A673 (cell line): ENCODE measurements at regions of chr2 and their contacts with region 1.

Region 1: GRCh38 chr2:50401772-50402653 is 629.9 kb downstream of the NRXN1 start:
- DNase-seq: peak; percentile 67
- H3K4me3 ChIP-seq: no peak overlapping the region
- H3K27ac ChIP-seq: no peak overlapping the region
- H3K4me1 ChIP-seq: no peaks in the 10 kb centered on the region
- H3K27me3 ChIP-seq: no peaks in the 10 kb centered on the region
- CTCF ChIP-seq: peak; percentile 87

Region 2: DNA sequence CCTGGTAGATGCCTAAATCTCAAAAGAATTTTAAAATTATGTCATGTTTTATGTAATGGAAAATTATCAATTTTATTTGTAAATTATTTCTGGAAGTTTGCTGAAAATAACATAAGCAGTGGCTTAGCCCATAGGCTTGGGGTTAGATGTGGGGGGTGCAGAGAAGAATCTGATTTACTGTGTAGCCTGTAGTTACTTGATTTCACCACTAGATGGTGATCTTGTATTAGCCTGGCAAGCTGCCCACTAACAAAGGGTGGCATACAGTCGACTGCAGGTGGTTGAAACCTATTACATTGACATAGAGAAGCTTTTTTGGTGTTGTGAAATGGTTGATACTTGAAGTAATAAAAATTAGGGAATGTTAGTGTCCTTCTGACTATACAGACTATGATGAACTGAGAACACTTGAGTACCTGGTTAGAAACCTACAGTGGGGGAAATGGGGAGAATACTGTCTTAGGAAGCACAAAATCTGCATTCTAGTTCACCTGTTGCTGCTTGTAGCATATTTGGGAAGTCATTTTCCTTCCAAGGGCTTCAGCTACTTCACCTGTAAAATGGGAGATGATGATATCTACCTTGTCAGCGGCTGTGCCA is 1455.5 kb before region 1 on chr2:
- CTCF ChIA-PET with region 1: interaction called, 3 read pairs
- POLR2A ChIA-PET with region 1: no interaction called
- intact Hi-C with region 1: loop called (anchors 2 kb)
- DNase-seq: peak; percentile 67
- H3K4me3 ChIP-seq: no peak overlapping the region
- H3K27ac ChIP-seq: no peak overlapping the region
- H3K4me1 ChIP-seq: peaks cover 6% of the 10 kb centered on the region
- H3K27me3 ChIP-seq: no peaks in the 10 kb centered on the region
- CTCF ChIP-seq: peak; percentile 86

Region 3: DNA sequence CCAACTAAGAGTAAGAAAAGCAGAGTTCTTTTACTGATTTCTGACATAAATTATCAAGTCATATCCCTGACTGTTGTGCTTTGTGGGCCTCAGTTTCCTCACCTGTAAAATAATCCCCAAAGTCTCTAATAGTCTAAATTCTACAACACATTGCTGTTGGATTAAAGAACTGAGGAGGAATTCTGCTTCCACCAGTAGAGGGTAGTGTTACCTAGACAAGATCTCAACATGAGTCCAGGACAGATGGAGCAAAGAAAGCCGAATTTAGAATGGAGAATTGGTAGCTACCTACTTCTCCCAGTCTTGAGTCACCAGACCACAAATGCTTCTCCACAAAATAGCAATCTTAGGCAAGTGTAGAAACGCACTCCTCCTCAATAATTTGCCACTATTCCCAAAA is 785.2 kb before region 1 on chr2:
- CTCF ChIA-PET with region 1: interaction called, 4 read pairs
- POLR2A ChIA-PET with region 1: no interaction called
- intact Hi-C with region 1: loop called (anchors 2 kb)
- DNase-seq: peak; percentile 52
- H3K4me3 ChIP-seq: no peak overlapping the region
- H3K27ac ChIP-seq: no peak overlapping the region
- H3K4me1 ChIP-seq: no peaks in the 10 kb centered on the region
- H3K27me3 ChIP-seq: no peaks in the 10 kb centered on the region
- CTCF ChIP-seq: peak; percentile 62

Region 4: GRCh38 chr2:49770919-49771318 is 631.1 kb before region 1 on chr2:
- CTCF ChIA-PET with region 1: interaction called, 6 read pairs
- POLR2A ChIA-PET with region 1: no interaction called
- intact Hi-C with region 1: loop called (anchors 2 kb)
- DNase-seq: peak; percentile 43
- H3K4me3 ChIP-seq: no peak overlapping the region
- H3K27ac ChIP-seq: no peak overlapping the region
- H3K4me1 ChIP-seq: no peaks in the 10 kb centered on the region
- H3K27me3 ChIP-seq: no peaks in the 10 kb centered on the region
- CTCF ChIP-seq: peak; percentile 56